ENCODE measurements at regions of chr17 and their contacts with region 1.

Region 1: DNA sequence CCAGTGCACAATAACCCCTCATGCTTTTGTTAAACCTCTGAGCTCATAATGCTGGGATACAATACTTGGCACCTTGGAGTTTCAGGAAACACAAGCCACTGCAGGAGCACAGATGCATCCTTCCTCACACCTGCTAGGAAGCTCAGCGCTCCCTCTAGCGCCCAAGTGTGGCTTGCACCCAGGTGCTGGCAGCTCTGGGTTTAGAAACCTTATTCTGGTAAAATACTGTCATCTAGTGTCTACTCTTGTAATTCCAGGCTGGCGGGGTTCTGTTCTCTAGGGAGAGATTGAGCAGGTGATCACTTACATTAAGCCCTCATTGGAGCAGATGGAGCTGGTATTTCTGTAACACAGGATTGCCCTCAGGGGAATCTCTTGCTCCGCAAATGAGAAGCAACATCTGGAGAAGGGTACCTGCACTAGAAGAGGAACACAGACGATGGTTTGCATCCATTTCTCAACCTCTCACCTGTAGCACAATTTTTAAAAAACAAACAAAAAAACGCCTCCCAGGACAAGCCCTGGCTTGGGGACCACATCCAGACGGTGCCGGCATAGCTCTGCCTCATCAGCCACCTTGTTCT is 1.5 kb downstream of the CCL1 start:
- DNase-seq: peak; percentile 97
- ATAC-seq: peak; percentile 96
- H3K4me3 Mint-ChIP-seq: no peak overlapping the region
- H3K27ac Mint-ChIP-seq: no peak overlapping the region
- H3K4me1 Mint-ChIP-seq: peaks cover 5% of the 10 kb centered on the region
- H3K27me3 Mint-ChIP-seq: peaks cover 13% of the 10 kb centered on the region; the same call in 1 of the 2 replicates
- CTCF ChIP-seq: peak; percentile 89

Region 2: GRCh38 chr17:34163646-34164045 is 197.9 kb before region 1 on chr17:
- CTCF ChIA-PET with region 1: interaction called, 24 read pairs
- POLR2A ChIA-PET with region 1: no interaction called
- DNase-seq: peak; percentile 44
- ATAC-seq: peak; percentile 92
- H3K4me3 Mint-ChIP-seq: no peak overlapping the region
- H3K27ac Mint-ChIP-seq: peak overlapping the region; percentile 35; the same call in 1 of the 2 replicates
- H3K4me1 Mint-ChIP-seq: peaks cover 54% of the 10 kb centered on the region
- H3K27me3 Mint-ChIP-seq: no peaks in the 10 kb centered on the region; the same call in 1 of the 2 replicates
- CTCF ChIP-seq: peak; percentile 39; the same call in 1 of the 2 replicates

Region 3: DNA sequence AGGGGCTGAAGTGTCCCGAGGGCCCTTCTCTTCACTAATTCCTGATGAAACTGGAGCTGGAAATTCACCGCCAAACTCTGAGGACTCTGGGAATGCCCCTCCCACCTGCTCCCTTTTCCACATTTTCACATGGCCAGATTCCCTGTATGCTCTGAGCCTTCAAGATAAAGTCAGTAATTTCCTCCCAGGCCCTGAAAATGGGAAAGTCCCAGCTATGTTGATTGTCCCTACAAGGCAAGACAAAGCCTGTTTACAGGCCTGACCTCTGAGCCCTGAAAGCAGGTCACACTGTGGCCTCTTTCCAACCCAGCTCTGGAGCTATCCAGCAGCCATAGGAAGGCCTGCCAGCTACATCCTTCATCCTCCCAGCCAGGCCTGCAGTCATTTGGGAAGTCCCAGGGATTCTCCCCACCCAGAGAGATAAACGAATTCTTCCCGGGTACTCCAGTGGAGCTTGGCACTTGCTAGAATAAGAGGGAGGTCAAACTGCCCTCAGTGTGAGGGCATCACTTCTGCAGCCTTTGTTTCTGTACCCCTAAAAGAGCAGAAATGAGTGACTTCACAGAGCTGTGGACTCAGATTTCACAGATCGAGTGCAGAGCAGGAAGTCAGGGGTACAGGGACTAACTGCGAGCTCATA is 126.1 kb before region 1 on chr17:
- CTCF ChIA-PET with region 1: interaction called, 20 read pairs
- POLR2A ChIA-PET with region 1: no interaction called
- DNase-seq: no peak
- ATAC-seq: peak; percentile 72
- H3K4me3 Mint-ChIP-seq: no peak overlapping the region
- H3K27ac Mint-ChIP-seq: no peak overlapping the region
- H3K4me1 Mint-ChIP-seq: peaks cover 25% of the 10 kb centered on the region
- H3K27me3 Mint-ChIP-seq: no peaks in the 10 kb centered on the region; the same call in 1 of the 2 replicates
- CTCF ChIP-seq: no peak

Region 4: DNA sequence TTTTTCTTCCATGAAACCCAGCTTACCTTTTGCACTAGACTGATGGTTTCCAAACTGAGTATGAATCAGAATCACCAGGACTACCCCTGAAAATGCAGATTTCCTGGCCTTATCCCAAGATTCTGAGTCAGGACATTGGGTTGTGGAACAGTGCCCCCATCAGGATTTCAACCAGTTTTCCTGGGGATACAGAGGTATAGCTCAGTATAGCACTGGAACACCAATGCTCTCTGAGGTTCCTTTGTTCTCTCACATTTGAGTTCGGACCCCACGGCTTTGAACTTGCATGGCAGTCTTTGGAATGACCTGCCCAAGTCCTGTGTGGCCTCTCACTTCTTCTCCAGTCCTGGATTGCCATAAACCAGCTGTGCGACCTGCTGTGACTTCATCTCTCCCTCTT is 55.1 kb before region 1 on chr17:
- CTCF ChIA-PET with region 1: interaction called, 166 read pairs
- POLR2A ChIA-PET with region 1: no interaction called
- DNase-seq: peak; percentile 51
- ATAC-seq: peak; percentile 98
- H3K4me3 Mint-ChIP-seq: no peak overlapping the region
- H3K27ac Mint-ChIP-seq: no peak overlapping the region
- H3K4me1 Mint-ChIP-seq: peaks cover 5% of the 10 kb centered on the region
- H3K27me3 Mint-ChIP-seq: no peaks in the 10 kb centered on the region; the same call in 1 of the 2 replicates
- CTCF ChIP-seq: no peak

Region 5: GRCh38 chr17:34378664-34379101 is 17.1 kb after region 1 on chr17:
- CTCF ChIA-PET with region 1: interaction called, 45 read pairs
- POLR2A ChIA-PET with region 1: no interaction called
- DNase-seq: no peak
- ATAC-seq: no peak
- H3K4me3 Mint-ChIP-seq: no peak overlapping the region
- H3K27ac Mint-ChIP-seq: no peak overlapping the region
- H3K4me1 Mint-ChIP-seq: peaks cover 7% of the 10 kb centered on the region
- H3K27me3 Mint-ChIP-seq: peaks cover 22% of the 10 kb centered on the region
- CTCF ChIP-seq: no peak

Region 6: GRCh38 chr17:34465789-34466188 is 104.2 kb after region 1 on chr17:
- CTCF ChIA-PET with region 1: no interaction called
- POLR2A ChIA-PET with region 1: no interaction called
- DNase-seq: no peak
- ATAC-seq: no peak
- H3K4me3 Mint-ChIP-seq: no peak overlapping the region
- H3K27ac Mint-ChIP-seq: no peak overlapping the region
- H3K4me1 Mint-ChIP-seq: peaks cover 12% of the 10 kb centered on the region
- H3K27me3 Mint-ChIP-seq: no peaks in the 10 kb centered on the region
- CTCF ChIP-seq: no peak